ENCODE measurements at regions of chrX and their contacts with region 1.

Region 1: GRCh38 chrX:17860811-17861488 is at the start of gene RAI2:
- DNase-seq: peak; percentile 64
- ATAC-seq: peak; percentile 66
- total RNA-seq, gene RAI2: 19.1 TPM

Region 2: GRCh38 chrX:17374619-17375366 is 486.2 kb before region 1 on chrX and contains the start of gene NHS:
- intact Hi-C with region 1: no loop called
- DNase-seq: peak; percentile 80
- ATAC-seq: peak; percentile 91
- total RNA-seq, gene NHS: 2.8 TPM

Region 3: DNA sequence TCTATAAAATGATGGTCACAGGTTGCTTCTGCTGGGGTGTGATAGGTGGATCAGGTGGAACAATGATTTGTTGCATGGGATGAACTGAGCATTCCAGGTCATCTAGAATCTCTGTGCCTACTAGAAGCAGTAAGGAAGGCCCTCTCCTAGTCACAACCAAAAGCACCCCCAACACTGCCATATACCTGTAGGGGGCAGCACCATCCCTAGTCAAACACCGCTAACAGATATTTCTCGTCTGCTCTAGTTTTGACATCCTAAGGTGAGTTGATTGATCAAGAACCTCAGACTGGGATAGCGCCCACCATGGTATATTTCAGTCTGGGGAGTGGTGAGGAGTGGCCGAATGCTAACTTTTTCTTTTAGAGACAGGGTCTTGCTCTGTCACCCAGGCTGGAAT is 325.7 kb before region 1 on chrX:
- intact Hi-C with region 1: no loop called
- DNase-seq: no peak
- ATAC-seq: no peak

Region 4: GRCh38 chrX:17812763-17813162 is 48.2 kb before region 1 on chrX:
- intact Hi-C with region 1: loop called (anchors 5 kb)
- DNase-seq: no peak
- ATAC-seq: no peak